Activated naive CD4-positive, alpha-beta T cell treated with anti-CD3 and anti-CD28 coated beads, Interleukin-2, amount 10 ng/mL, durations not matched to agents 7 days and 5 days (primary cell): ENCODE measurements at regions of chr19 and their contacts with region 1.

Region 1: GRCh38 chr19:35213663-35214632 is 14.6 kb downstream of the FAM187B start:
- DNase-seq: peak; percentile 81
- H3K4me3 Mint-ChIP-seq: peak overlapping the region; percentile 15
- H3K27ac Mint-ChIP-seq: peak overlapping the region; percentile 100
- H3K4me1 Mint-ChIP-seq: peaks cover 84% of the 10 kb centered on the region
- H3K27me3 Mint-ChIP-seq: no peaks in the 10 kb centered on the region

Region 2: GRCh38 chr19:35154525-35155406 is 59.2 kb before region 1 on chr19 and contains the start of gene FXYD5:
- CTCF ChIA-PET with region 1: interaction called, 10 read pairs
- DNase-seq: peak; percentile 85
- H3K4me3 Mint-ChIP-seq: peak within 1 kb of the TSS; percentile 98
- H3K27ac Mint-ChIP-seq: peak within 1 kb of the TSS; percentile 95
- H3K4me1 Mint-ChIP-seq: peaks cover 67% of the 10 kb centered on the region
- H3K27me3 Mint-ChIP-seq: peaks cover 22% of the 10 kb centered on the region